Panc1 (cell line): ENCODE measurements at regions of chr11 and their contacts with region 1.

Region 1: GRCh38 chr11:32176223-32176934 is 85.5 kb downstream of the RCN1 start:
- DNase-seq: peak; percentile 67
- ATAC-seq: peak; percentile 73
- H3K4me3 ChIP-seq: no peak overlapping the region
- H3K27ac ChIP-seq: no peak overlapping the region
- H3K4me1 ChIP-seq: no peaks in the 10 kb centered on the region
- H3K27me3 ChIP-seq: peaks cover 5% of the 10 kb centered on the region; the same call in 1 of the 2 replicates
- CTCF ChIP-seq: peak; percentile 91

Region 2: DNA sequence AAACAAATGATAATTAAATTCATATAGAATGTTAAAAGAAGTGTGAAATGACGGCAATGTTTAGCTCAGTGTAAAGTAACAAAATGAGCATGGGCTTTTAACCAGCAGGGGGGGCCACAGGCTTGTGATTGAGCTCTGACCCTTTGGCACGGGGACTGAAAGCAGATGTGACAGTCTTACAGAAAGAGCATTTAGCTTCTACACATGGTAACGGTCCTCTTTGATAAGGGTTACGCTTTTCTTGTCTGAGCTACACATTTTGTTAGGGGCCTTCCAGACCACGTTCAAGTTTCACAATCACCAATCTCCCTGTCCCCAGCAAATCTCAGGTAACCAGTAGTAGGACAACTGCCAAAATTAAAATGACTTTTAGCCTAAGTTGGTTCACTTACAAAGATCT is 1069.3 kb before region 1 on chr11:
- CTCF ChIA-PET with region 1: no interaction called
- POLR2A ChIA-PET with region 1: no interaction called
- in situ Hi-C with region 1: no loop called
- intact Hi-C with region 1: loop called (anchors 10 kb)
- DNase-seq: peak; percentile 33
- ATAC-seq: peak; percentile 91
- H3K4me3 ChIP-seq: no peak overlapping the region
- H3K27ac ChIP-seq: no peak overlapping the region
- H3K4me1 ChIP-seq: no peaks in the 10 kb centered on the region
- H3K27me3 ChIP-seq: no peaks in the 10 kb centered on the region; the same call in 1 of the 2 replicates
- CTCF ChIP-seq: peak; percentile 79

Region 3: DNA sequence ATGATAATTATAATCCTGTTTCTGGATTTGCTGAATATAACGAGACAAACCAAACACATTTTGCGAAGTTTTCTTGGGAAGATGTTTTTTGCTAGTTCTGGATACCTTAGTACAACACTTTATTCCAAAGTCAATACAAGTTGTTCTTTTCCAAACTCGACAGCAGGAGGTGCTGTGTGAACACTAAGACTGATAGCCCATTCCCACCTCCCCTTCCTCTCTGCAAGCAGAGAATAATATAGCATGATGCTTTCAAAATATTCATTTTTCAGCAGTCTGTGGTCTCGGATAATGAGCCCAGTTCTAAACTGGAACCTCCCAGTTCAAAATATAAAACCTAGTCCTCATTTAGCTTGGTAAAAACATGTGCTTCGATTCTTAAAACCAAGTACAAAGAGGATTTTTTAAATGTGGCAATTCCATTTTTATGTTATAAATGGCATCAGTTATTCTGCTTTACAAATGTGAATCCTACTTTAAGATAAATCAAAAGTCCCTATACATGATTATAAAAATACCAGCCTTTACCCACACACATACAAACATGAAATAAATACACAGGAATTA is 936.0 kb before region 1 on chr11:
- CTCF ChIA-PET with region 1: no interaction called
- POLR2A ChIA-PET with region 1: no interaction called
- in situ Hi-C with region 1: no loop called
- intact Hi-C with region 1: loop called (anchors 5 kb)
- DNase-seq: peak; percentile 18
- ATAC-seq: no peak
- H3K4me3 ChIP-seq: no peak overlapping the region
- H3K27ac ChIP-seq: no peak overlapping the region
- H3K4me1 ChIP-seq: no peaks in the 10 kb centered on the region
- H3K27me3 ChIP-seq: no peaks in the 10 kb centered on the region
- CTCF ChIP-seq: peak; percentile 71; the same call in 1 of the 2 replicates

Region 4: DNA sequence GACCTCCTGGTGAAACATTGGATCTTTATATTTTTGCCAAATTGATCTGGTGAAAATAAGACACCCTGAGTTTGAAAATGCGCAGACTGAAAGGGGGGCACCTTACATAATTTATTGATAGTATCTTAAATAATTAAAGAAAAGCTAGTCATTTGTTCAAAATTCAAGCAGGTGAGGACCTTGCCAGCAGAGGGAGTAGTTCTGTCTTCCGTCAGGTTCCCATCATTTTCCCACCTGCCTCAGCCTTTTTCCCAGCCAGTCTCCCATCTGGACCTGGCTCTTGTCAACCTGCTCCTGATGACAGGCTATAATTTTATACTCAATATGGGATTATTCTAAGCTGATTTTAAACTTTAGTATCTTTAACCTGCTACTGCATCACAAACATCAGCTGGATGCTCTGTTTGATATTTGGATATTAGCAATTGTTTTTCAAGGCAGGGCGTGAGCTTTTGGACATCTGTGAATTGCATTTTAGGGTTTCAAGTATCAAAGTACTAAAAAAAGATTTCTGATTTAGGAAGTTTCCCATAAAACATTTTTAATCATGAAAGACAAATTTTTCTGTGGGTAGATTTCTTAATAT is 534.8 kb before region 1 on chr11:
- CTCF ChIA-PET with region 1: no interaction called
- POLR2A ChIA-PET with region 1: no interaction called
- in situ Hi-C with region 1: no loop called
- intact Hi-C with region 1: loop called (anchors 10 kb)
- DNase-seq: no peak
- ATAC-seq: no peak; the same call in 1 of the 2 replicates
- H3K4me3 ChIP-seq: no peak overlapping the region
- H3K27ac ChIP-seq: no peak overlapping the region
- H3K4me1 ChIP-seq: no peaks in the 10 kb centered on the region
- H3K27me3 ChIP-seq: no peaks in the 10 kb centered on the region
- CTCF ChIP-seq: peak; percentile 84

Region 5: DNA sequence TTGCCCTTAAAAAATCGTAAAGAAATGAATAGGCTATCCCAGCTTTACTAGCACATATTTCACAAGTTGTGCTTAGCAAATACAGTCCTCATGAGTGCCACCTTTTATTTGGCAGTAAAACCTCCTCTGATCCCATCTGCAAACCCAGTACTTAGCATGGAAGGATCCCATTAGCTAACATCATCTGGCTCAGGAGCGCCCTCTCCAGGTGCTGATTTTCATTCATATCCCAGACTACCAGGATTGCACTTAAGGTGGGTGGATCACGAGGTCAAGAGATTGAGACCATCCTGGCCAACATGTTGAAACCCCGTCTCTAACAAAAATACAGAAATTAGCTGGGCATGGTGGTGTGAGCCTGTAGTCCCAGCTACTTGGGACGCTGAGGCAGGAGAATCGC is 289.2 kb before region 1 on chr11:
- CTCF ChIA-PET with region 1: no interaction called
- POLR2A ChIA-PET with region 1: no interaction called
- in situ Hi-C with region 1: no loop called
- intact Hi-C with region 1: loop called (anchors 10 kb)
- DNase-seq: no peak
- ATAC-seq: no peak
- H3K4me3 ChIP-seq: no peak overlapping the region
- H3K27ac ChIP-seq: no peak overlapping the region
- H3K4me1 ChIP-seq: no peaks in the 10 kb centered on the region
- H3K27me3 ChIP-seq: peaks cover 12% of the 10 kb centered on the region
- CTCF ChIP-seq: peak; percentile 53

Region 6: GRCh38 chr11:32052218-32052617 is 124.2 kb before region 1 on chr11:
- CTCF ChIA-PET with region 1: interaction called, 5 read pairs
- POLR2A ChIA-PET with region 1: no interaction called
- in situ Hi-C with region 1: no loop called
- intact Hi-C with region 1: loop called (anchors 1 kb)
- DNase-seq: no peak
- ATAC-seq: peak; percentile 73
- H3K4me3 ChIP-seq: no peak overlapping the region
- H3K27ac ChIP-seq: no peak overlapping the region
- H3K4me1 ChIP-seq: no peaks in the 10 kb centered on the region
- H3K27me3 ChIP-seq: peaks cover 24% of the 10 kb centered on the region
- CTCF ChIP-seq: peak; percentile 82

Region 7: DNA sequence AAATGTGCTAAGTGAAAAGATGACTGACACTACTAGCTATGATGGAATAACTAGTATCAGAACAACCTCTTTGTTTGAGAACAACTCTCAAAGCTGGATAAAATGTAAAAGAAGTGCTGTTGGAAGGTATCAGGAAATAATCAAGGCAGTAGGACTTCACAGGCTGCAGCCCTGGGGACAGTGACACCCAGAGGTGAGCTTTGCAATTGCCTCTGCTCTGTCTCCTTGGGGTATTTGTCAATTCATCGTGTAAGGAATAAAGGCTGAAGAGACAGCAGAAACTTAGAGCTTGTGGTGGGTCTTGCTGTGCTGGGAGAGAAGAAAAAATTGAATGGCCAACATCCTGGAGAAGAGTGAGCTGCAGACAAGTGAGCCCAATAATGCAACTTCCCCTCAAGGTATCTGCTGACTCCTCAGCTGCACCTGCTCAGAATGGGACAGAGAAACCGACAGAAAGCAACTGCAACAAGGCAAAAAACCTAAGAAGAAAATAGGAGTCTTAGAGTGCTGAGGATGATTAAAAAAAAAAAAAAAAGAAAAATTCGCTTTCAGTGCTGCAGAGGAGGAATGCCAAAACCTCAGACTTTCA is 55.6 kb after region 1 on chr11:
- CTCF ChIA-PET with region 1: no interaction called
- POLR2A ChIA-PET with region 1: no interaction called
- in situ Hi-C with region 1: no loop called
- intact Hi-C with region 1: no loop called
- DNase-seq: no peak
- ATAC-seq: peak; percentile 89
- H3K4me3 ChIP-seq: no peak overlapping the region
- H3K27ac ChIP-seq: no peak overlapping the region
- H3K4me1 ChIP-seq: no peaks in the 10 kb centered on the region
- H3K27me3 ChIP-seq: peaks cover 15% of the 10 kb centered on the region; the same call in 1 of the 2 replicates
- CTCF ChIP-seq: peak; percentile 87

Region 8: GRCh38 chr11:32297611-32298011 is 121.2 kb after region 1 on chr11:
- CTCF ChIA-PET with region 1: no interaction called
- POLR2A ChIA-PET with region 1: no interaction called
- in situ Hi-C with region 1: no loop called
- intact Hi-C with region 1: loop called (anchors 5 kb)
- DNase-seq: no peak
- ATAC-seq: peak; percentile 78; the same call in 1 of the 2 replicates
- H3K4me3 ChIP-seq: no peak overlapping the region
- H3K27ac ChIP-seq: no peak overlapping the region
- H3K4me1 ChIP-seq: no peaks in the 10 kb centered on the region
- H3K27me3 ChIP-seq: peaks cover 4% of the 10 kb centered on the region; the same call in 1 of the 2 replicates
- CTCF ChIP-seq: peak; percentile 60